Spleen (tissue), 13 donors: ENCODE measurements at regions of chr1 and their contacts with region 1.

Region 1: DNA sequence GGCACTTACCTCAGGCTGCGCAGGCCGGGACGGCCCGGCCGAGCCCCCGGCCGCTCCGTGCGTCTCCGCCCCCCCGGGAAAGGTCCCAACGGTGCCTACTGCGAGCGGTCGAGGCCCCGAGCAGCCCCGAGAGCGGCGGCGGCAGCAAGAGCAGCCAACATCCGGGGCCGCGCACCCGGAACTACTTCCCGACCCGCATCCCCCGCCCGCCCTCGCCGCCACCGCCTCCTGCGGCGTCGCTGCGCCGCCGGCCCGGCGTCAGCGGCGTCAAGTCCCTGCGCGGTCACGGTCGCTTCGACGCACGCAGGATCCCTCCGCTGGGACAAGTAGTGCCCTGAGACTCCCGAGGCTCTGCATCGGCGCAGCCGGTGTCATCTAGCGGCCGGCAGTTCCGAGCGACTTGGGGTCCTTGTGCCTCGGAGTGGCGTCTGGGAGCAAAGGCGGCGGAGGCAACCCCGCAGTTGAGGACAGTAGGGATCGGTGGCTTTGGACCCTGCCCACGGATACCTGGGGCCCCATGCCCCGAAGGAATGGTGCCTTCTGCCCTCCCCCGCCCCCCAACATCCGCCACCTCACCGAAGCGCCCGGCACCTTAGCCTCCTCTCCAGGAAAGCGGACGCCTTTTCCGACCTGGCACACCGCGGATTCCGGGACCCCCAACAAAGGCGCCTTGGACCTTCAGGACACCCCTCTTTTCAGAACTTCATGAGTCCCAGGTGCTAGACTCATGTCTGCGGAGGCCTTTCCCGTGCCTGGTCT is at the start of gene FOXJ3:
- DNase-seq: peak; percentile 98
- H3K4me3 ChIP-seq: peak within 1 kb of the TSS; percentile 80 to 99 (median 98)
- H3K27ac ChIP-seq: peak within 1 kb of the TSS; percentile 89 to 97 (median 94)
- H3K4me1 ChIP-seq: peaks cover 22 to 60% (median 44%) of the 10 kb centered on the region in 6 donors
- H3K27me3 ChIP-seq: no peaks in the 10 kb centered on the region
- CTCF ChIP-seq: peak in 4 of 11 experiments; percentile 20 to 49 (median 26)
- POLR2A ChIP-seq: peak in 2 of 3 donors; percentile 5 to 23
- total RNA-seq, gene FOXJ3: 51.0 to 85.8 (median 66.1) TPM

Region 2: GRCh38 chr1:42173155-42173933 is 161.9 kb before region 1 on chr1:
- intact Hi-C with region 1: loop called (anchors 10 kb)
- DNase-seq: peak; percentile 92
- H3K4me3 ChIP-seq: no peak overlapping the region
- H3K27ac ChIP-seq: peak overlapping the region; percentile 45 to 79 (median 67)
- H3K4me1 ChIP-seq: peaks cover 9 to 53% (median 36%) of the 10 kb centered on the region in 6 donors
- H3K27me3 ChIP-seq: no peaks in the 10 kb centered on the region
- CTCF ChIP-seq: peak; percentile 75 to 97 (median 93)
- POLR2A ChIP-seq: no peak

Region 3: GRCh38 chr1:42439940-42440339 is 104.7 kb after region 1 on chr1:
- intact Hi-C with region 1: no loop called
- DNase-seq: no peak
- H3K4me3 ChIP-seq: no peak overlapping the region
- H3K27ac ChIP-seq: no peak overlapping the region
- H3K4me1 ChIP-seq: no peaks in the 10 kb centered on the region
- H3K27me3 ChIP-seq: no peaks in the 10 kb centered on the region
- CTCF ChIP-seq: no peak
- POLR2A ChIP-seq: no peak